ENCODE measurements at regions of chr10 and their contacts with region 1.

Region 1: GRCh38 chr10:12656518-12657142 is 307.3 kb downstream of the CAMK1D start:
- DNase-seq: no peak
- ATAC-seq: peak; percentile 60
- H3K4me3 Mint-ChIP-seq: no peak overlapping the region
- H3K27ac Mint-ChIP-seq: no peak overlapping the region
- H3K4me1 Mint-ChIP-seq: peaks cover 13% of the 10 kb centered on the region
- H3K27me3 Mint-ChIP-seq: no peaks in the 10 kb centered on the region
- CTCF ChIP-seq: no peak

Region 2: DNA sequence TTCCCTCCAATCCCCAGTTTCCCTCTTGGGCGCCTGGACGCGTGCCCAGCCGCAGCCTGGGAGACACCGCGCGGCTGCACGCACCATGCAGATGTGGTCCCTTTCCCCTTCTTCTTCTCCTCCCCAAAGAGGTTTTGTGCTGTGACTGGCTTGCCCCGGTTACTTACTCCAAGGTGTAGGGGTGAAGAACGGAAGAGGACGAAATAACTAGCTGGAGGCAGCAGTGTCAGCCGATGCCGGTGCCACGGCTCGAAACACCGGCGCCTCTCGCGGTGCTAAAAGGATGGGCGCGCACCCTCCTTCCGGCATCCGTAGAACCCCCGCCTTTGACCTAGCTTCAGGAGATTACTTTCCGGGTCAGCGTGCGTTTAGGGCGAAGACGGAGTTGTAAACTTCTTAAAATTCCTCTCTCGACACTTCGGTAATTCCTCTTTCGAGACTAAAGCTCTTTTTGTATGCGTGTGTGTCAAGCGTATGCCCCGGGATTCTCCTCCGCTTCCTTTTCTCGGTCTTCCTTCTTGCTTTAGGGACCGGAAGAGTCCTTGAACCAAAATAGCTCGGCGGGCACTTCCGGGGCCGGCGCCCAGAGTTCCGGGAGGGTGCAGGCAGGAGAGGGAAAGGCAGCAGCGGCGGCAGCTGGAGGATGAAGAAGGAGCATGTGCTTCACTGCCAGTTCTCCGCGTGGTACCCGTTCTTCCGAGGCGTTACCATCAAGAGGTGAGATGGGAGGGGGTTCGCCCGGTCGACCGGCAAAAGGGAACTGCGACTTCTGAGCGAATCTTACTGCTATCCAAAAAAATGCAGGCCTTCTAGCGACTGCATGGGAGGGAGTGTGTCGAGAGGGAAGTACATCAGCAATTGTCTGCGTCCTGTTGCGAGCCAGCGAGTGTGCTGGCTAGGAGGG is 460.8 kb before region 1 on chr10 and contains the starts of genes CDC123 and NUDT5:
- CTCF ChIA-PET with region 1: interaction called, 4 read pairs
- POLR2A ChIA-PET with region 1: no interaction called
- intact Hi-C with region 1: loop called (anchors 5 kb)
- DNase-seq: peak; percentile 81
- ATAC-seq: peak; percentile 92
- H3K4me3 Mint-ChIP-seq: peak within 1 kb of the TSS; percentile 93
- H3K27ac Mint-ChIP-seq: peak within 1 kb of the TSS; percentile 99
- H3K4me1 Mint-ChIP-seq: peaks cover 49% of the 10 kb centered on the region
- H3K27me3 Mint-ChIP-seq: no peaks in the 10 kb centered on the region
- CTCF ChIP-seq: no peak
- total RNA-seq, gene CDC123: 81.1 and 84.6 TPM in 2 replicates
- total RNA-seq, gene NUDT5: 53.2 and 57.3 TPM in 2 replicates

Region 3: DNA sequence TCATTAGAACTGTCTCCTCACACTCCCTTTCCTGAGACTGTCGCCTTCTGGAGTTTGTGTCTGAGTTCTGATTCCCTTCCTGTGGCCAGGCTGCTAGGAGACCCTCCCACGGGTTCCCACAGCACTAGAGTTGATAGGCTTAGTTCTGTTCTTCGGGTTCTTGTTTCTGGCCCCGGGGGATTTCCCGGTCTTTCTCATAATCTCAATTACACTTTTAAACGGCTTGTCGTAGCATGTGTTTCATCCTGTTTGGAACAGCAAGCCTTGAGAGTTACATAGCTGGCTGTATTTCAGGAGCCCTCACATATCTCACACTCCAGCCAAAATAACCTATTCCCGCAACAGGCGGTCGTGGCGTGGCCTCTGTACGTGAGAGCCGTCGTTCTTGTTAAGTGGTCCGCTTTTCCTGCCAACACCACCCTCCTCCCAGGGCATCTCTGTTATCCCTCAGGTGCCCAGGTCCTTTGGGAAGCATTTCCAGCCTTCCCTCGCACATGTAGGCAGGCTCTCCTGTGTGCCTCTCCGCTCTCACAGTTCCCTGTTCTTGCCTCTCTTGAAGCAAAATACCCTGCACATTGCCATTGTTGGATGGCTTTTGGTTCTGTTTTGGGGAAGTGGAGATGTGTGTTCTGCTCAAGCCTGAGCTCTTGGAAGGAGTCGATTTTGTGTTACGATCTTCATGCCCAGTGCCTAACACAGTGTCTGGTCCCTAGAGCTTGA is 414.7 kb before region 1 on chr10:
- CTCF ChIA-PET with region 1: interaction called, 9 read pairs
- POLR2A ChIA-PET with region 1: interaction called, 10 read pairs
- intact Hi-C with region 1: no loop called
- DNase-seq: no peak
- ATAC-seq: no peak
- H3K4me3 Mint-ChIP-seq: peak overlapping the region; percentile 29
- H3K27ac Mint-ChIP-seq: peak overlapping the region; percentile 75
- H3K4me1 Mint-ChIP-seq: peaks cover 69% of the 10 kb centered on the region
- H3K27me3 Mint-ChIP-seq: no peaks in the 10 kb centered on the region
- CTCF ChIP-seq: no peak

Region 4: DNA sequence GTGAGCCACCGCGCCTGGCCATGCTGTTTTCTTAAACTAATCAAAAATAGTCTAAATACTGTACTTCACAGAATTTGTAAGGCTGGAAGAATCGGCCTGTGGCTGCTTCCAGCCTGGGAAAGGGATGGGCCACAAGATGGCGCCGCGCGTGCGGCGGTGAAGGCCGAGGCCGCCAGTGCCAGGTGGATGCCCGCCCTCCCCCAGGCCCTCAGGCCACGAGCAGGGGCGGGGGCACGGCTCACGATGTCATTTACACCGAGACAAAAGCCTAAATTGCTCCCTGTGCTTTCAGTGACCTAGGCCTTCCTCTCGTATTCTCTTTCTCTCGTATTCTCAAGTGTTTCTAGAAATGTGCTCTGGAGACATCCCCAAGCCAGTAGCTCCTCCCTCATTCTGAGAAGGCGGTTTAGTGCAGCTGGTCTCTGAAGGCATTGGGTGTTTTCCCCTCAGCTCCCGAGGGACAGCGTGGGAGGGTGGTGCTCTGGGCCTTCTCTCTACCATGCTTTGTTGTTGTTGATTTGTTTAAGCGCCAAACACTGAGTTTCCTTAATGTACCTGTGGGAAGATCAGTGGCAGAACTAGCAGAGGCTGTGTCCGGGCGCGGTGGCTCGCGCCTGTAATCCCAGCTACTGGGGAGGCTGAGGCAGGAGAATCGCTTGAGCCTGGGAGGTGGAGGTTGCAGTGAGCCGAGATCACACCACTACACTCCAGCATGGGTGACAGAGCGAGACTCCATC is 392.3 kb before region 1 on chr10:
- CTCF ChIA-PET with region 1: interaction called, 35 read pairs
- POLR2A ChIA-PET with region 1: interaction called, 5 read pairs
- intact Hi-C with region 1: loop called (anchors 1 kb)
- DNase-seq: peak; percentile 86
- ATAC-seq: peak; percentile 87
- H3K4me3 Mint-ChIP-seq: peak overlapping the region; percentile 83
- H3K27ac Mint-ChIP-seq: peak overlapping the region; percentile 100
- H3K4me1 Mint-ChIP-seq: peaks cover 58% of the 10 kb centered on the region
- H3K27me3 Mint-ChIP-seq: no peaks in the 10 kb centered on the region
- CTCF ChIP-seq: no peak

Region 5: DNA sequence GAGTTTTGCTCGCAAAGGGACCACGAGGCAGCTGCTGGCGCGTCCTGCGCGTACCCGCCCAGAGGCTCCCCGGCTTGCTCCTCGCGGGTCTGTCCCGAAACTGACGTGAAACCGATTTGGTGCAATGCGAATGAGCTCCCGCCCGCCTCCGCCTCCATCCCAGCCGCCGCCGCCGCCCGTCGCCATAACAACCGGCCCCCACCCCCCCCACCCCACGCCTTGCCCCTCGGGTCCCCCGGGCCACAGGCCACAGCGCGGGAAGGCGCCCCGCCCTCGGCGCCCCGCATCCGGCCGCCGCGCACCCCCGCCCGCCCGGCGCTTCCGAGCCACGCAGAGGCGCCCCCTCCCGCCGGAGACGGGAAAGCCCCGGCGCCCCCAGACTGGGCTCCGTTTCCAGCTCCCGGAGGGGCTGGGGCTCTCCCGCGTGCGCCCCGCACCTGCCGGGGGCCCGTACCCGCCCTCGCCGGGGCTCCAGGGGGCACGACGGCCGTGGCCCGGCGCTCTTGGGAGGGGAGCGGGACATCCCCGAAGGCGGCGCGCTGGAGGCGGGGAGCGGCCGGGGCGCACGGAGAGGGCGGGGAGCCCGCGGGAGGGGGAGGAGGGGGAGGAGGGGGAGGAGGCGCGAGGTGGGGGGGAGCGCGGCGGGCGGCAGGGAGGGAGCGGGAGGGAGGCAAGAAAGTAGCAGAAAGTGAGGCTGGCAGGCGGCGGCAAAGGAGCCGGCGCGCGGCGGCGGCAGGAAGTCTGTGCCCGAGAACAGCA is 307.6 kb before region 1 on chr10 and contains the start of gene CAMK1D:
- CTCF ChIA-PET with region 1: interaction called, 10 read pairs
- POLR2A ChIA-PET with region 1: no interaction called
- intact Hi-C with region 1: loop called (anchors 1 kb)
- DNase-seq: peak; percentile 87
- ATAC-seq: peak; percentile 66
- H3K4me3 Mint-ChIP-seq: peak within 1 kb of the TSS; percentile 98
- H3K27ac Mint-ChIP-seq: peak within 1 kb of the TSS; percentile 98
- H3K4me1 Mint-ChIP-seq: peaks cover 61% of the 10 kb centered on the region
- H3K27me3 Mint-ChIP-seq: no peaks in the 10 kb centered on the region
- CTCF ChIP-seq: no peak
- total RNA-seq, gene CAMK1D: 51.7 and 58.8 TPM in 2 replicates

Region 6: DNA sequence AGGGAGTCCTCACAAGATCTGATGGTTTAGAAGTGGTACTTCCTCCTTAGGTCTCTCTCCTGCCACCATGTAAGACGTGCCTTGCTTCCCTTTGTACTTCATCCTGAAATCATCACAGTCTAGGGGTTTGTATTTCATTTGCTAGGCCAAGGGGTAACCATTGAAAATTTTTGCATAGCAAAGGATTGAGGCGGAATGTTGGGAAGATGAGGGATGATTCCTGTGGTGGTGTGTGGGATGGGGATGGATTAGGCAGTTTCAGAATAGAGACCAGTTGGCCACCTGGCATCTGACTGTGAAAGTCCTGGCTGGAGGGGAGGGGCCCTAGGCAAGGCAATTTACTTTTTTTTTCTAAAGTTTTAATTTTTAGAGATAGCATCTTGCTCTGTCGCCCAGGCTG is 84.3 kb before region 1 on chr10:
- CTCF ChIA-PET with region 1: no interaction called
- POLR2A ChIA-PET with region 1: no interaction called
- intact Hi-C with region 1: no loop called
- DNase-seq: no peak
- ATAC-seq: no peak
- H3K4me3 Mint-ChIP-seq: no peak overlapping the region
- H3K27ac Mint-ChIP-seq: no peak overlapping the region
- H3K4me1 Mint-ChIP-seq: peaks cover 15% of the 10 kb centered on the region
- H3K27me3 Mint-ChIP-seq: no peaks in the 10 kb centered on the region
- CTCF ChIP-seq: no peak

Region 7: DNA sequence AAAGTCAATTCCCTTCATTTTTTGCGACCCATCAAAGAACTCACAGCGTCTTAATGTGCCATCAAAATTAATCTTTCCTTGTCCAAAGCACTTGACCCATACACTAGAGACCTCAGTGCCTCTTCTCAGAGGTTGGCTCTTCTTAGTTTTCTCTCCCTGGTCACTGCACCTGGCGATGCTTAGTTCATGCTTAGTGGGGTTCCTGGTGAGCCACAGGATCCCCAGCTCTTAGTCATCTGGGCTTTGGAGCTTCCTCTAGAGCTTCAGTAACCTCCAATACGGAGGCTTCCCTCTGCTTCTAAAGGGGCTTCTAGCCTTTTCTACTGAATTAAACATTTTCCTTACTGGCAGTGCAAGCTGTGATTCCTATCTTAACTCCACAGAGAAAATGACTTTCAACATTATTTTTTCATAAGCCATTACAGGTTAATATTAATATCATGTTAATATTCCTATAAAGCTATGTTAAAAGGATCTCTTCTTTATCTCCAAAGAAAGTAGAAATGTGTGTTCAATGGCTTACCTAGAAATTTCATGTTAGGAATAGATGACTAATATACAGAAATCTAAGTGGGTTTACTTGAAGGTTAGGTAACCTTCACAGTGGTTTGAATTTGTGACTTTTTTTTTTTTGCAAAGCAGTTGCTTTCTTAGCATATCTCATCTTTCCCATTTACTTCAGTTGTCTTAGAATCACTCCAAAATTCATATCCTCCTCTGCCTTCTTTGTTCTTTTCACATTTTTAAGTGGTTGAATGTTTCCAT is 12.1 kb before region 1 on chr10:
- CTCF ChIA-PET with region 1: interaction called, 21 read pairs
- POLR2A ChIA-PET with region 1: no interaction called
- intact Hi-C with region 1: no loop called
- DNase-seq: no peak
- ATAC-seq: no peak
- H3K4me3 Mint-ChIP-seq: no peak overlapping the region
- H3K27ac Mint-ChIP-seq: no peak overlapping the region
- H3K4me1 Mint-ChIP-seq: peaks cover 13% of the 10 kb centered on the region
- H3K27me3 Mint-ChIP-seq: no peaks in the 10 kb centered on the region
- CTCF ChIP-seq: no peak

Region 8: GRCh38 chr10:12699258-12699700 is 42.6 kb after region 1 on chr10:
- CTCF ChIA-PET with region 1: no interaction called
- POLR2A ChIA-PET with region 1: no interaction called
- intact Hi-C with region 1: no loop called
- DNase-seq: no peak
- ATAC-seq: no peak
- H3K4me3 Mint-ChIP-seq: no peak overlapping the region
- H3K27ac Mint-ChIP-seq: no peak overlapping the region
- H3K4me1 Mint-ChIP-seq: no peaks in the 10 kb centered on the region
- H3K27me3 Mint-ChIP-seq: no peaks in the 10 kb centered on the region
- CTCF ChIP-seq: no peak

Measured in activated B cell treated with CpG ODN at 0.5 μM for 24 hours (primary cell).